Stomach (tissue), 19 donors: ENCODE measurements at regions of chr4 and their contacts with region 1.

Region 1: DNA sequence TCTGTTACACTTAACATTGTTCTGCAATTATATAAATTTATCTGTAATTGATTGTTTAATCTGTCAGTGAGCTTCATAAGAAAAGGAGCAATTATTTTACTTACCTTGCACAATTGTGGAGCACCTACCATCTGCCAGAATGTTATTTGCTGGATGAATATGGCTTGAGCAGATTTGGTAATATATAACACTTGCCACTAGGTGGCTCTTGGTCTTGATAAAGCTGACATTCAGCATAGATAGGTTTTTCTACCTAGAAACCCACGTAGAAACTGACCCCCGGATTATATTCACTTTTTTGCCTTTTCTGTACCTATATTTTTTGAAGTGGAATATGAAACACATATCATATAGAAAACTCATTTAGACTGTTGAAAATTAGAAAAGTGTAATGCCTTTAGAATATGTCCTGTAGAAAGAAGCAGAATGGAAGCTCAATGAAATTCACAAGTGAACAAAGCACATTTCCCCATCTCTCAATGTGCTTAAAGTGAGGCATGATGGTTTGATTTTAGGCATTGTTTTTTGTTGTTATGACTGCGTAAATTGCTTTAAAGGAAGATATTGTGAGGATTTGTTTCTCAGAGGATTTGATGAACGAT is 9.5 kb downstream of the RBPJ start:
- DNase-seq: peak in 1 of 2 donors; percentile 83
- H3K4me3 ChIP-seq: no peak overlapping the region
- H3K27ac ChIP-seq: no peak overlapping the region
- H3K4me1 ChIP-seq: peaks cover 16 to 81% (median 46%) of the 10 kb centered on the region in 4 donors
- H3K27me3 ChIP-seq: no peaks in the 10 kb centered on the region
- CTCF ChIP-seq: peak in 5 of 7 experiments; percentile 48 to 70 (median 54)
- EP300 ChIP-seq: no peak
- POLR2A ChIP-seq: no peak

Region 2: GRCh38 chr4:26397086-26397485 is 66.8 kb after region 1 on chr4:
- intact Hi-C with region 1: loop called (anchors 10 kb)
- DNase-seq: no peak
- H3K4me3 ChIP-seq: no peak overlapping the region
- H3K27ac ChIP-seq: peak overlapping the region in 1 of 5 donors; percentile 11
- H3K4me1 ChIP-seq: peaks cover 0 to 28% (median 14%) of the 10 kb centered on the region in 4 donors
- H3K27me3 ChIP-seq: no peaks in the 10 kb centered on the region
- CTCF ChIP-seq: no peak
- EP300 ChIP-seq: no peak
- POLR2A ChIP-seq: no peak